ENCODE measurements at regions of chr2 and their contacts with region 1.

Region 1: DNA sequence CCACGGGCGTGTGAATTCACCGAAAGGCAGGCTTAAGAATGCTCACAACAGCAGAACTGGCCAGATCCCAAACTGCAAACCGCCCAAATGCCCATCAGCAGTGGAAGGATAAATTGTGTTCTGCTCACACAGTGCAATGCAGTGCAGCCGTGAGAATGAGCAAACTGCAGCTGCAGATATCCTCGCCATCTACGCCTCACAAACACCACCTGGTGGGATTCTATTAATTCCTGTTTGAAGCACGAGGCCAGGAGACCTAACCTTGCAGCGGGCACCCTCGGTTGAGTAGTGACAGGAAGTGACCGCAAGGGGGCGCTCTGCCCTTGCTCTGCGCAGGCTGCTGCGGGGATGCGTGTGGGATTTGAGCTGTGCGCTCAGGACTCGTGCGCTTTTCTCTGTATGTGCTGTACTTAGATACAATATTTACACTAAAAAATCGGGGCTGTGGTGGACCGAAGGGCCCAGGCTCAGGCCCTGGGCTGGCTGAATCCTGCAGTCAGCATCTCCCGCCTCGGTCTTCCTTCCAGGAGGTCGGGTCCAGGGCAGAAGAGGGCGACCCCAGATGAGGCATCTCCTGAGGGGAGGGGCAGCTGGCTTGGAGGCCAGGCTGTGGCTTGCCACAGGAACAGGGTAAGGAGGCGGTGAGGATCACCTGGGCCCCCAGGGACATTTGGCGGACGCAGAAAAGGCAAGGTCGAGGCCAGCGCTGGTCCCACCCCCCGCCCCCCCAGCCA is 19.8 kb upstream of the PDIA6 start:
- DNase-seq: peak; percentile 90

Region 2: GRCh38 chr2:10538224-10538894 is 294.0 kb before region 1 on chr2:
- intact Hi-C with region 1: no loop called
- DNase-seq: no peak

Region 3: DNA sequence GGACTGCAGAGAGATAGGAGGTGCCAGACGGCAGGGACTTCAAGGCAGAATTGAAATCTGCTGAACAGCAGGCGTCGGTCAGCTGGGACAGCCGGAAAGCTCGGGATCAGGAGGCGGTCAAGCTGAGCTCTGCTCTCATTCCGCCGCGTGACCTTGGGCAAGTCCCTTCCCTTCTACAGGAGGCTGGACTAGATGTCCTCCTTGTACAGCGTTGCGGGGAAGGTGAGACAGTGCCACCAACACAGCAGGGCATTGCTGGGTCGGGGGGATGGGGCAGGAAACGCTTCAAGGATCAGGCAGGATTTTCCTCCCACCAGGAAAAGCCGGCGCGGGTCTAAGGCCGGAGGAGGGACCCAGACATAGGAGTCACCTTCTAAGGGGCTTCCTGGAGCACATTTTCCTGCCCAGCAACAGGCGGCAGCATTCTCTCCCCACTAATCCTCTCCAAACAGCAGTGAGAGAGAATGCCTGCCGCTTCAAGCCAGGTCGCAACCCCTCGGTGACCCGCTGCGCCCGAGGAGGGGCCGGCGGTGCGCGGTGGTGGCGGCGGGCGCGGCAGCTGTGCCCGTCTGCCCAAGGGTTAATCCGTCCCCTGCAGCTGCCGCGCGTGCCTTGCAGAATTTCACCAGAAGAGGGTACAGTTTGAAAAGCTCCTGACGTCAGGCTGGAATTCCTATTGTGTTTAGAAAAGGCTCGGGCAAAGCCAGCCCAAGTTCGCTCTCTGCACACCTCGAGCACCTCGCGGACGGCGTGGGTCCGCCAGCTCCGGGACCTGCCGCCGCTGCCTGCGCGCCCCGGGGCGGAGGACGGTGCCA is 79.1 kb after region 1 on chr2 and contains the start of gene KCNF1:
- intact Hi-C with region 1: loop called (anchors 2 kb)
- DNase-seq: peak; percentile 55
- total RNA-seq, gene KCNF1: 0.27 TPM

Region 4: GRCh38 chr2:11124503-11125068 is 292.2 kb after region 1 on chr2:
- intact Hi-C with region 1: loop called (anchors 1 kb)
- DNase-seq: no peak

Region 5: DNA sequence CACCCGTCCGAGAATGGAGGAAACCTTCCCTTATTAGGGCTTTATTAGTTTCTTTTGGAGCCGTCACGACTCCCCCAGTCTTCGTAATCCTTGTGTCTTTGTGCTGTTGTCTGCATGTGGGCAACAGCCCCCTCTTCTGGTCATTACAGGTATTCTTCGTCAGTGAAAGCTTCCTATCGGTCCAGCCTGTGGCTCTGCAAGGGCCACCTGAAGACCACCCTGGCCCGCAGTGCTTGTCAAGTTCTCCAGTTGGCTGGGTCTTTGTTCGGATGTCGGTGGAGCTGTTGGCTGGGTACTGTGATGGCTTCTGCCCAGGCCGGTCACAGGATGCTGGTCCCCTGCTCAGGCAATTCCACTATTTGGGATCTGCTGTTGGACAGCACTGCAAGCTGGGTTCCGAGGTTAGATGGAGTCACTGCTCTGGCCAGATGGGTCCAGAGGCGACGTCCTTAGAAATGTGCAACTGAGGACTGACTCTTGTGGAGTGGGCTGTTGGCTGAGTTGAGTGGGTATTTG is 614.4 kb after region 1 on chr2:
- intact Hi-C with region 1: loop called (anchors 10 kb)
- DNase-seq: no peak